ENCODE measurements at regions of chr11 and their contacts with region 1.

Region 1: GRCh38 chr11:96342961-96343711 is at the start of gene MAML2:
- DNase-seq: peak; percentile 67 to 95 (median 89)
- ATAC-seq: peak; percentile 82 to 90 (median 85)
- H3K4me3 ChIP-seq: peak within 1 kb of the TSS; percentile 69 to 97
- H3K4me3 Mint-ChIP-seq: peak within 1 kb of the TSS; percentile 87 to 98 (median 98)
- H3K27ac ChIP-seq: peak within 1 kb of the TSS; percentile 61
- H3K27ac Mint-ChIP-seq: peak within 1 kb of the TSS; percentile 93 to 98
- H3K4me1 ChIP-seq: peaks cover 11 to 36% of the 10 kb centered on the region in 2 experiments
- H3K4me1 Mint-ChIP-seq: peaks cover 23 to 46% (median 36%) of the 10 kb centered on the region in 3 donors
- H3K27me3 ChIP-seq: no peaks in the 10 kb centered on the region
- H3K27me3 Mint-ChIP-seq: no peaks in the 10 kb centered on the region
- total RNA-seq, gene MAML2: 30.4 to 66.7 (median 35.1) TPM

Region 2: DNA sequence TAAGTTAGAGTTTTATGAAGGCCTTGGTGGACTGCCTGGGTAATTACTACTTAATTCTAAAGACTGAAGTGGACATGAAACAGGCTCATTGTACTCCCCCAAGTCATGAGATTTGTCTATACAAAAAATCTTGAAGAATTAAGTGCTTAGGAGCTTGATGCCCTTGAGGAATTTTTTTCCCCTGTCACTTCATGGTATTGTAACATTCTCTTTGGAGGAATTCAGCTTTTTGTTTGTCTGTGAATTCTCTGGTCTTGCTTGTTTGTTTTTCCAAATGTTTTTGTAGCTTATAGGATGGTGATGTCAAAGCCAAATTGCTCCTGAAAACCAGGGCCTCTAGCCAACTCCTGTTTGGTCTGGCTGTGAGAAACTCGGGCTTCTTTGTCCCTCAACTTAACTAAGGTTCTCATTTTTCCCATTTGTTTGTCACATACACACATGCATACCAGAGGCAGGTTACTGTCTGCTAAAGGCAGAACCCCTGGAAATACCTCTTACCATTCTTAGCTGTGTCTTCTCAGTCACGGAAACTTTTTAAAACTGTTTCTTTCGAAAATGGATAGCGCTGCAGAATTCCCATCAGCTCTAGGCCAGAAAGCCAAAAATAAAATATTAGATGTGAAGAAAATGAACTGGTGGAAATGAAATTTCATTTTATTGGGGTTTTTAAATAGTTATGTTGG is 1508.1 kb before region 1 on chr11:
- CTCF ChIA-PET with region 1: no interaction called
- POLR2A ChIA-PET with region 1: no interaction called
- DNase-seq: no peak
- ATAC-seq: no peak
- H3K4me3 ChIP-seq: no peak overlapping the region
- H3K4me3 Mint-ChIP-seq: no peak overlapping the region
- H3K27ac ChIP-seq: no peak overlapping the region
- H3K27ac Mint-ChIP-seq: no peak overlapping the region
- H3K4me1 ChIP-seq: no peaks in the 10 kb centered on the region
- H3K4me1 Mint-ChIP-seq: no peaks in the 10 kb centered on the region
- H3K27me3 ChIP-seq: no peaks in the 10 kb centered on the region
- H3K27me3 Mint-ChIP-seq: peaks cover 3 to 4% of the 10 kb centered on the region in 2 donors

Region 3: DNA sequence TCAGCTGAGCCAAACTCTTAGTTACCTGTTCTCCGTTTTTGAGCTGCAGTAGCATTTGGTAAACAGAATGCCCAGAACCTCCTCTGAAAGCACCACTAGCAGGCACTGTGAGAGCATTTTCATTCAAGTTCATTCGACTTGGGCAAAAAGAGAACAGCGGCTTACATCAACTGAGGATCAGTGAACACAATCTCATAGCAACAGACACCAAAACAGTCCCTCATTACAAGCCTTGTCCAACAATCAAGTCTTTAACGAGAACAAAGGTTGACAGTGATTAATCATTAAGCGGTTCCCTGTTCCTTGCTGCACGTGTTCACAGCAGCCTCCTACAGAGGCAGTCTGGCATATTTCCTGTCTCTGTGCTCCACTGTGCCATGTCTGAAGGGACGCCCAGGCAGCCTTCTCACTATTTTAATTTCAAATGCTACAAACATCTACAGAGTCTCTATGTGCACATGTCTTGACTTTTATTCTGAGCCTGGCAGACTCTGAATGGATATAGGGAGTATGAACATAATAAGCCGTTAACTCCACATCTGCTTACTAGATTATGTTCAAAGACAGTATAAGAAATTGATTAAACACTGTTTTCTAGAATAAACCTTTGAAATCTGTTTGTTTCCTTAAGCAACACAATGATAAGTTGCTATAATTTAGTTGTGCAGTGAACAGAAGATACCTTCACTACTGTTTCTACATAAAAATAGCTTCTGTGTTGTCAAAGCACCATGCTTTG is 330.9 kb before region 1 on chr11:
- CTCF ChIA-PET with region 1: interaction called, 5 to 13 read pairs
- POLR2A ChIA-PET with region 1: interaction called in 1 of 2 experiments, 5 read pairs
- DNase-seq: peak in 34 of 35 experiments; percentile 3 to 81 (median 48)
- ATAC-seq: peak; percentile 71 to 83 (median 78)
- H3K4me3 ChIP-seq: peak overlapping the region; percentile 6 to 51
- H3K4me3 Mint-ChIP-seq: peak overlapping the region; percentile 47 to 68 (median 60)
- H3K27ac ChIP-seq: peak overlapping the region; percentile 65
- H3K27ac Mint-ChIP-seq: peak overlapping the region; percentile 91
- H3K4me1 ChIP-seq: peaks cover 27 to 57% of the 10 kb centered on the region in 2 experiments
- H3K4me1 Mint-ChIP-seq: peaks cover 0 to 69% (median 66%) of the 10 kb centered on the region in 3 donors
- H3K27me3 ChIP-seq: no peaks in the 10 kb centered on the region
- H3K27me3 Mint-ChIP-seq: no peaks in the 10 kb centered on the region

Region 4: DNA sequence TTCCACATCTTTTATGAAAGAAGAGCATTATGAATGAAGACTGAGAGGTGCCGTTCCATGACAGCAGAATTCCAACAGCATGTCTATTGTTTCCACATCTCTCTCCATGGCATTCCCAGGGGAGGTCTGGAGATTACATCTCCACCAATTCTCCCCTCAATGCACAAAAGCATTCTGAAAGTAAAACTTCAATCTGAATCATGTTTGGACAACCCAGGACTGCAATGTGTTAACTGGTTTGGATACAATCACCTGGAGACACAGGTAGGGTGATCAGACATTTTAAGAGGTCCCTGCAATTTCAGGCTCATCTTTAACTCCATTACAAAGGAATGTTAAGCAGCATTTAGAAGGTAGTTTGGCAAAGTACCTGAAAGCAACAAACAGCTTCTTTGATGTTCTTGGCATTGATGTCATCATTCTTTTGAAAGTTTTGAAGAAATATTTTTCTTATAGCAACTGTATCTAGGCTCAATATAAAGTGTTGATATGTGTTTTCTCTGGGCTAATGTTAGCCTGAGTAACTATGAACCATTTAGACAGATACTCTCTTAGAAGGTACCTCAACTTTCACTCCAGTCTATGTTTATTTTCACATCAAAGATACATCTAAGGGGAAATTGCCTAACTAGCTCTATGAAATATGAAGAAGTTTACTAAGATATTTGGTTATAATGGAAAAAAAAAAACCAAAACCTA is 237.8 kb before region 1 on chr11:
- CTCF ChIA-PET with region 1: interaction called, 4 to 10 read pairs
- POLR2A ChIA-PET with region 1: interaction called in 1 of 2 experiments, 9 read pairs
- DNase-seq: peak in 2 of 35 experiments; percentile 36 to 68
- ATAC-seq: peak in 3 of 4 experiments; percentile 61 to 98 (median 81)
- H3K4me3 ChIP-seq: no peak overlapping the region
- H3K4me3 Mint-ChIP-seq: peak overlapping the region in 2 of 3 donors; percentile 8 to 25
- H3K27ac ChIP-seq: peak overlapping the region; percentile 40
- H3K27ac Mint-ChIP-seq: peak overlapping the region; percentile 67 to 74
- H3K4me1 ChIP-seq: peaks cover 0 to 20% of the 10 kb centered on the region in 2 experiments
- H3K4me1 Mint-ChIP-seq: peaks cover 18 to 54% (median 45%) of the 10 kb centered on the region in 3 donors
- H3K27me3 ChIP-seq: no peaks in the 10 kb centered on the region
- H3K27me3 Mint-ChIP-seq: no peaks in the 10 kb centered on the region

Region 5: GRCh38 chr11:96242971-96243647 is 100.0 kb before region 1 on chr11:
- CTCF ChIA-PET with region 1: interaction called, 13 to 36 read pairs
- POLR2A ChIA-PET with region 1: interaction called, 4 to 7 read pairs
- DNase-seq: peak; percentile 24 to 81 (median 68)
- ATAC-seq: peak; percentile 70 to 92 (median 81)
- H3K4me3 ChIP-seq: peak overlapping the region; percentile 45 to 50
- H3K4me3 Mint-ChIP-seq: peak overlapping the region; percentile 79 to 86 (median 85)
- H3K27ac ChIP-seq: peak overlapping the region; percentile 55
- H3K27ac Mint-ChIP-seq: peak overlapping the region; percentile 80 to 98
- H3K4me1 ChIP-seq: peaks cover 31 to 37% of the 10 kb centered on the region in 2 experiments
- H3K4me1 Mint-ChIP-seq: peaks cover 60 to 66% (median 61%) of the 10 kb centered on the region in 3 donors
- H3K27me3 ChIP-seq: no peaks in the 10 kb centered on the region
- H3K27me3 Mint-ChIP-seq: no peaks in the 10 kb centered on the region

Region 6: GRCh38 chr11:96306933-96307775 is 36.0 kb before region 1 on chr11:
- CTCF ChIA-PET with region 1: interaction called, 8 to 13 read pairs
- POLR2A ChIA-PET with region 1: interaction called in 1 of 2 experiments, 3 read pairs
- DNase-seq: peak in 11 of 35 experiments; percentile 3 to 40 (median 11)
- ATAC-seq: peak; percentile 73 to 87 (median 82)
- H3K4me3 ChIP-seq: peak overlapping the region in 1 of 2 donors; percentile 32
- H3K4me3 Mint-ChIP-seq: peak overlapping the region; percentile 54 to 58 (median 55)
- H3K27ac ChIP-seq: no peak overlapping the region
- H3K27ac Mint-ChIP-seq: peak overlapping the region; percentile 68 to 78
- H3K4me1 ChIP-seq: peaks cover 8 to 16% of the 10 kb centered on the region in 2 experiments
- H3K4me1 Mint-ChIP-seq: peaks cover 80 to 84% (median 80%) of the 10 kb centered on the region in 3 donors
- H3K27me3 ChIP-seq: no peaks in the 10 kb centered on the region
- H3K27me3 Mint-ChIP-seq: no peaks in the 10 kb centered on the region

Region 7: DNA sequence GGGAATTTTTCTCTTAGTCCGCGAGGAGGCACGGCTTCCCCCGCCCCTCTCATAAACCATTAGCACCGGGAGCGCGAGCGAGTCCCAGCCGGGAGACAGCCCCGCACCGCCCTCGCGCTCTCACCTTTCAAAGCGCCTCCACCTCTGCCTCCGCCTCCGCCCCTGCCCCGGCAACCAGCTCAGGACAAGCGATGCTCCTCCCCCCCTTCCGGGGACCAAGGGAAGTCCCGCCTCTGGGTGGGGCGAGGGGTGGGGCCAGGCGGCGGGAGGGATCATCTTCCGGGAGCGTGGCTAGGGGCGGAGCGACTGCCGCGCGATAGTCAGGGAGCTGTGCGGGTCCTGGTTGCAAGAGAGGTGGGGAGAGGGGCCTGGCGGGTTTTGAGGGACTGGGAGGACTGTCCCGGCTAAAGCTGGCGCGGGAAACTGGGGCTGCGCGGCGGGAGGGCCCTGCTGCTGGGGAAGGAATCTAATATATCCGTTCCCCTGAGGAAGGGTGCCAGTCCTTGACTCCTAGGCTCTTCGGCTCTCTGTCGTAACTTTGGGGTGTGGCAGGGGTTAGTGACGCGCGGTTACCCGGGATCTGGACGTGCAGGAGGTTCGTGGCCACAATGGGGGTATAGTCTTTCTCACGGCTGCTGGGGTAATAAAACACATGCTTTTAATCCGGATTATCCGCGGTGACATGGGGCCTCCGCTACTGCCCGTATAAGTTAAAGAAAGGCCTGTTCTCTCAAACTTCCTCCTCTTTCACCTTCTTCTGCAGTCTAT is 46.8 kb after region 1 on chr11 and contains the starts of genes CCDC82 and JRKL:
- CTCF ChIA-PET with region 1: interaction called, 6 to 66 read pairs
- POLR2A ChIA-PET with region 1: interaction called, 3 to 38 read pairs
- DNase-seq: peak; percentile 94 to 99 (median 97)
- ATAC-seq: peak; percentile 94 to 99 (median 97)
- H3K4me3 ChIP-seq: peak within 1 kb of the TSS; percentile 68 to 88
- H3K4me3 Mint-ChIP-seq: peak within 1 kb of the TSS; percentile 91 to 94 (median 93)
- H3K27ac ChIP-seq: peak within 1 kb of the TSS; percentile 68
- H3K27ac Mint-ChIP-seq: peak within 1 kb of the TSS; percentile 88 to 91
- H3K4me1 ChIP-seq: peaks cover 7 to 15% of the 10 kb centered on the region in 2 experiments
- H3K4me1 Mint-ChIP-seq: peaks cover 43 to 56% (median 53%) of the 10 kb centered on the region in 3 donors
- H3K27me3 ChIP-seq: no peaks in the 10 kb centered on the region
- H3K27me3 Mint-ChIP-seq: no peaks in the 10 kb centered on the region
- total RNA-seq, gene CCDC82: 28.9 to 37.1 (median 33.5) TPM
- total RNA-seq, gene JRKL: 4.8 to 15.6 (median 12.3) TPM

Region 8: DNA sequence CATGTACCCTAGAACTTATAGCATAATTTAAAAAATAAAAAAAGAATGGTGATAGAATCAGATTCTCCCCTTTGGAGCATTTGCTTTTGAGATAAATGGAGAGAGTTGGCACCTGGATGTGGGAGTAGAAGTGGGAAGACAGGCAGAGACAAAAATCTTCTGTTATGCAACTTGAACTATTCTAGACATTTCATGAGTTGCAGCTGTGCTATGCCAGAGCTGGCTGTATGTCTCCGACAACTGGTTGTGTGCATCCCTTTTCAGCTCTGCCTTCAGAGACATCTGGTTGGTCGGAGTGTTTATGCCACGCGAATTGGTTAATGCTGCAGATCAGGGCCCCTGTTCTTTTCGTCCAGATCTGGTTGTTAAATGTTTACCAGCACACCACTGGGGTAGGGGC is 208.0 kb after region 1 on chr11:
- CTCF ChIA-PET with region 1: no interaction called
- POLR2A ChIA-PET with region 1: no interaction called
- DNase-seq: no peak
- ATAC-seq: no peak
- H3K4me3 ChIP-seq: no peak overlapping the region
- H3K4me3 Mint-ChIP-seq: no peak overlapping the region
- H3K27ac ChIP-seq: no peak overlapping the region
- H3K27ac Mint-ChIP-seq: no peak overlapping the region
- H3K4me1 ChIP-seq: no peaks in the 10 kb centered on the region
- H3K4me1 Mint-ChIP-seq: no peaks in the 10 kb centered on the region
- H3K27me3 ChIP-seq: no peaks in the 10 kb centered on the region
- H3K27me3 Mint-ChIP-seq: peaks cover 0 to 4% of the 10 kb centered on the region in 2 donors